ENCODE measurements at regions of chr14 and their contacts with region 1.

Region 1: DNA sequence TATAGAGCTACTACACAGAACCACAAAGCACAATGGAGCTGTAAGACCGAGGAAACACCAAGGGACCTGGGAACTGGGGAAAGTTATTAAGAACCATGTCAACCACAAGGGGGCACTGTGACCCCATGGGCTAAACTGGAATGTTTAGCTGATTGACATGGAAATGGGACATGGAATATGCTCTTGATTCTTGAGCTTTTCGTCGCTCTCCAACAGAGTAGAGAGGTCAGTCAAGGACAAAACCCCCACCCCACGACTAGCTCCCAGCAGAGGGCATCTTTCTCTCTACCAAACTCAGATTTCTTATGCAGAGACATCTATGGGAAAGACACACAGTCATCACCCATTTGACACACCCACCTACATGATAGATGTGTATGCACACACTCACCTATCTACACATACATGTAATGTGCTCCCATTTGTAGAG is 10.1 kb downstream of the NDRG2 start:
- DNase-seq: peak; percentile 92
- ATAC-seq: peak; percentile 94
- H3K4me3 ChIP-seq: no peak overlapping the region
- H3K27ac ChIP-seq: no peak overlapping the region
- H3K4me1 ChIP-seq: no peaks in the 10 kb centered on the region
- H3K27me3 ChIP-seq: peaks cover 34% of the 10 kb centered on the region
- CTCF ChIP-seq: peak; percentile 94

Region 2: GRCh38 chr14:20922474-20922873 is 92.3 kb before region 1 on chr14:
- CTCF ChIA-PET with region 1: no interaction called
- POLR2A ChIA-PET with region 1: no interaction called
- intact Hi-C with region 1: no loop called
- DNase-seq: no peak
- ATAC-seq: no peak
- H3K4me3 ChIP-seq: no peak overlapping the region
- H3K27ac ChIP-seq: no peak overlapping the region
- H3K4me1 ChIP-seq: no peaks in the 10 kb centered on the region
- H3K27me3 ChIP-seq: peaks cover 62% of the 10 kb centered on the region
- CTCF ChIP-seq: no peak

Region 3: DNA sequence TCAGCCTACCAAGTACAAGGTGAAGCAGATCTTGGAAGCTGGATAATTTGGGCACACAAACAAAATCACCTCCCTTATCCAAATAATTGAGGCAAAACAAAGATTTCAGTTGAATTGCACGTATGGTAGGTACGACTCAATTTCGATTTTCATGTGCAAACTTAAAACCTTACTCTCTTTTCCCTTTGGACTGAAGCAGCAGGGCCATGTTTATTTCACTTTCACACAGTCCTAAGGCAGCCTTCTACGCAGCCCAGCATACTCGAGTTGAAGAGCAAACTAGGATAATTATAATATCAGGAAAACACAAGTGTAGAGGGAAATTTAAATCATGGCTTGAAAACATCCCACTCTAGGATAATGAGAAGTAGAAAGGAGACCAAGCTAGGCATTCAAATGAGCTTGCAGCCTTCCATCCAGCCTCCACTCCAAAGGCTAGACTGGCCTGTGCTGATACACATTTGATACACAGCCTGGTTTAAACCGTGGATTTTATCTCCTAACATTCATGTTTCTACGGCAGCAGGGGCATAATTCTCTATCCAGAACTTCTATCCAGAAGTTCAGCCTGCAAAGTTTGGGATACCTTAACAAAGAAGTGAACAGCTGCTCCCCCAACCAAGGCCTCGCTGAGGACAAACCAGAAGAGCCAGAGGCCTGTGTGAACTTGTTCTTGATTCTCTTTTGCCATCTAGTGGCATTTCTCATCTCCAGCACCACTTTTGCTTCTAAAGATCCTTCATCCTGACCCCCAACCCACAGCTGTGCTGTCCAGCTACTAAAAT is 25.0 kb after region 1 on chr14:
- CTCF ChIA-PET with region 1: interaction called, 17 read pairs
- POLR2A ChIA-PET with region 1: no interaction called
- intact Hi-C with region 1: loop called (anchors 1 kb)
- DNase-seq: peak; percentile 62
- ATAC-seq: peak; percentile 83
- H3K4me3 ChIP-seq: no peak overlapping the region
- H3K27ac ChIP-seq: no peak overlapping the region
- H3K4me1 ChIP-seq: no peaks in the 10 kb centered on the region
- H3K27me3 ChIP-seq: peaks cover 39% of the 10 kb centered on the region
- CTCF ChIP-seq: peak; percentile 67

Region 4: GRCh38 chr14:21056520-21057163 is 41.9 kb after region 1 on chr14:
- CTCF ChIA-PET with region 1: no interaction called
- POLR2A ChIA-PET with region 1: no interaction called
- intact Hi-C with region 1: no loop called
- DNase-seq: peak; percentile 21
- ATAC-seq: no peak
- H3K4me3 ChIP-seq: no peak overlapping the region
- H3K27ac ChIP-seq: no peak overlapping the region
- H3K4me1 ChIP-seq: no peaks in the 10 kb centered on the region
- H3K27me3 ChIP-seq: peaks cover 28% of the 10 kb centered on the region
- CTCF ChIP-seq: no peak

Region 5: DNA sequence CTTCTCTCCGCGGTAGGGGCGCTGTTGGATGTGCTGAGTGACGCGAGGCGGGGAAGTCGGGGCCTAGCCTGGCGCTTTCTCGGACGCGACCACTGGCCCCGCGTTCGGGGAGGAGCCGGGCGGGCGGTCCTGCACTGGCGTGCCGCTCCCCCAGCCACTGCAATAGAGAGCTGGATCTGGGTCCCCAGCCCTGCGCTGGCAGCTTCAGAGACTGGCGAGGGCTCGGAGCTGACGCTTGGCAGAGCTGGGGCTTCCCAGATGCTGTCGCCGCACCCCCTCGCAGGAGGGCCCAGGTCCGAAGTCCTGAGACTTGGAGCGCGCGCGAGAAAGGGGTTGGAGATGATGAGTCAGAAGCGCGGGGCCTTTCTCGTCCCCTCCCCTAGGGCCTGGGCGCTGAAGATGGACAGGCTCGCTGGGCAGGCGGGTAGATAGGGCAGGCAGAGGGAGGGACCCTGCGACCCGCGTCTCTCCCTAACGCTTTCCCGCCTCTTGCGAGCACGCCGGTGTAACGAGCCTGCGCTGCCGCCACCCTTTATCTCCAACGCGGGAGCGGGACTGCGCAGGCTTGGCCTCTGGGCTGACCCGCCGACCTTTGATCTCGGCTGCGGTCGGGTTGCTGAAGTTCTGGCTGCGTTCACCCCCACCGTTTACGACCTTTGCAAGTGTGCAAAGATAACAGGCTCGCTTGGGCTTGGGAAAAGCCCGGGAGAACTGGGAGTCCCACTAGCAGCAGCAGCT is 89.1 kb after region 1 on chr14:
- CTCF ChIA-PET with region 1: interaction called, 23 read pairs
- POLR2A ChIA-PET with region 1: no interaction called
- intact Hi-C with region 1: loop called (anchors 1 kb)
- DNase-seq: peak; percentile 96
- ATAC-seq: peak; percentile 86
- H3K4me3 ChIP-seq: peak overlapping the region; percentile 69
- H3K27ac ChIP-seq: peak overlapping the region; percentile 80
- H3K4me1 ChIP-seq: peaks cover 49% of the 10 kb centered on the region
- H3K27me3 ChIP-seq: no peaks in the 10 kb centered on the region
- CTCF ChIP-seq: peak; percentile 67